ENCODE measurements at regions of chr22 and their contacts with region 1.

Region 1: DNA sequence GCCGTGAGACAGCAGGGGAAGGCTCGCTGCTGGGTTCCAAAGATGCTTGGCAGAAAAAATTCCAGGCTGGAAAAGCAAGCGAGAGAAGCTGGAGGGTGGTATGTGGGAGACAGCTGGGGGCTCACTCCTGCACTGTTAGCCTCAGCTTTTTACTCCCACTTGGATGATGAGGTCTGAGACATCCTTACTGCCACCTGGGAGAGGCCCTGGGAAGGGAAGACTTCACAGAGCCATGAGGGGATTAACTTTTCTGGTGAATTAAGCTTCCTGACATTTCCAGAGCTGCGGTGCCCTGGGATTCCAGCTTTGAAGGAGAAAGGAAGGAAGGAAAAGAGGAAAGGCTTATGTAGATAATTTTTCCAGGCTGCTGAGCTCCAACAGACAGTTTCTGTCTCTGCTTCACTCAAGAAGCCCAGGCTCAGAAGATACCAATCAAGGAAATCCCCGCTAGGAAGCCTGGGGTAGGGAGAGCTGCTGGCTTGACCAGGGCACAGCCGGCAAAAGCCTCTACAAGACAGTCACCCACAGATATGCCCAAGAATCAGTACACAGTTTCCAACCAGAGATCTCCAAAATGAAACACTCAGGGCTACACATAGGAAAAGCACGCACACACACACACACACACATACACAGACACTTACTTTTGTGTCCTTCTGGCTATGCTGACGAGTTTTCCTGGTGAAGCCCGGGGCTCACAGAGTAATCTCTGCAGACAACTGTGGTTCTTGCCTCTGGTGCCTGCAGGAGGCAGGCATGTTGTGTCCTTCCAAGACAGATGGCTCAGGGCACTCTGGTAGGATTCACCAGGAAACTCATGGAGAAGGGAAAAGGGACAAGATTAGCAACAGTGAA is 907 bp downstream of the MCHR1 start:
- DNase-seq: no peak
- H3K4me3 Mint-ChIP-seq: no peak overlapping the region
- H3K27ac Mint-ChIP-seq: no peak overlapping the region
- H3K4me1 Mint-ChIP-seq: peaks cover 27% of the 10 kb centered on the region
- H3K27me3 Mint-ChIP-seq: peaks cover 49% of the 10 kb centered on the region

Region 2: DNA sequence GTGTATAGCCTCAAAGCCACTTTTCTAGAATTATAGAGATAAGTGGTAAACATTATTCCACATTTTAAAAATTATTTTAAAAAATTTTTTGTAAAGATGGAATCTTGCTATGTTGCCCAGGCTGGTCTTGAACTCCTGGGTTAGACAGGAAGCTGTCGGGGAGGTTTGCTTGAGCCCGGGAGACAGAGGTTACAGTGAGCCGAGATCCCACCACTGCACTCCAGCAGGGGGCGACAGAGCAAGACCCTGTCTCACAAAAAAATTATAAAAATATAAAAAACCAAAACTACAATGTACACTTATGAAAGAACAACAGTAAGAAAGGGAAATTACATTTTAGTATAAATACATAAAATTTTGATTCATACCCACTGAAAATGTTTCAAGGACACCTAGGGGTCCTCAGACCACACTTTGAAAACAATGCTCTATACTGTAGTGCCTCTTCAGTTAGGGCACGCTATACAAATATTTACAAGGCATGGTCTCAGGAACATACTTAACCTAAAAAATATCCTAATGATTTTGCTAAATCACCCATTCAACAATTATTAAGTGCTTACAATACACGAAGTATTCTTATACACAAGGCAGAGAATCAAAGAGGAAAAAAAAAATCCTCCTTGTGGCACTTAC is 154.8 kb before region 1 on chr22:
- CTCF ChIA-PET with region 1: interaction called, 13 read pairs
- DNase-seq: peak; percentile 81
- H3K4me3 Mint-ChIP-seq: no peak overlapping the region
- H3K27ac Mint-ChIP-seq: no peak overlapping the region
- H3K4me1 Mint-ChIP-seq: peaks cover 20% of the 10 kb centered on the region
- H3K27me3 Mint-ChIP-seq: no peaks in the 10 kb centered on the region

Region 3: GRCh38 chr22:40709752-40710413 is 29.7 kb after region 1 on chr22:
- CTCF ChIA-PET with region 1: interaction called, 20 read pairs
- DNase-seq: no peak
- H3K4me3 Mint-ChIP-seq: no peak overlapping the region
- H3K27ac Mint-ChIP-seq: no peak overlapping the region
- H3K4me1 Mint-ChIP-seq: peaks cover 14% of the 10 kb centered on the region
- H3K27me3 Mint-ChIP-seq: peaks cover 36% of the 10 kb centered on the region

Region 4: DNA sequence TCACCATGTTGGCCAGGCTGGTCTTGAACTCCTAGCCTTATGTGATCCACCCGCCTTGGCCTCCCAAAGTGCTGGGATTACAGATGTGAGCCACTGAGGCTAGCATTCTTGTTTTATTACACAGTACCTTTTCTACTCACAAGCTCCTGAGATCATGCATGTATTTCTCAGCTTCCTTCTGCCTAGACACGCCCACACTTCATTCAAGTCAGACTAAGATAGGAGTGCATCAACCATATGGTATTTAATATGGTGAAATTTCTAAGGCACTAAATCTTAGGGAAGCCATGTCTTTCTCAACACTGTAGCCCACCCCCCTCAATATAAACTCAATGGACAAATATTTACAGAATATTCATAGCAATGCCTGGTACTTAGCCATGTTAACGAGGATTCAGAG is 76.9 kb after region 1 on chr22:
- CTCF ChIA-PET with region 1: interaction called, 70 read pairs
- DNase-seq: no peak
- H3K4me3 Mint-ChIP-seq: no peak overlapping the region
- H3K27ac Mint-ChIP-seq: no peak overlapping the region
- H3K4me1 Mint-ChIP-seq: no peaks in the 10 kb centered on the region
- H3K27me3 Mint-ChIP-seq: peaks cover 8% of the 10 kb centered on the region

Region 5: DNA sequence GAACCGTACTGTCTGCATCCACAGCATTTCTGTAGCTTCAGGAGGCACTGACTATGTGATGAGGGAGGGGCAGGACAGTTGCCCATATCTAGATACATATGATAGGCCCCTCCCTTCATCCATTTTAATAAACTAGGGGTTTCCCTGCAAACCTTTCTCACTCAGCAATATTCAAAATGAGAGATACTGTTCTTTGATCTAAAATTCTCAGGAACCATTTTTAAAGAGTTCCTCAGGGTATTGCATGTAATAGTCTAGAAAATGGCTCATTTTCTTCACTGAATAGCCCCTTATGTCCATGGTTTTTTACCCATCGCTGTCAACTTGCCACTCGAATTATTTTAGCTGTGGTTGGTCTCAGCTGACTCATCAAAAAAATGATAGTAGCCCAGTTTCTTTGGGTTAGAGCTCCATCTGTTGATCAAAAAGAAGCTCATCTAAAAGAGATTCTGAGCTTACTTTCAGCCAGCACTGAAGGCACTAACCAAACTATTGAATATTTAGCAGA is 218.7 kb after region 1 on chr22:
- CTCF ChIA-PET with region 1: interaction called, 47 read pairs
- DNase-seq: peak; percentile 23
- H3K4me3 Mint-ChIP-seq: no peak overlapping the region
- H3K27ac Mint-ChIP-seq: no peak overlapping the region
- H3K4me1 Mint-ChIP-seq: peaks cover 8% of the 10 kb centered on the region
- H3K27me3 Mint-ChIP-seq: no peaks in the 10 kb centered on the region

Region 6: DNA sequence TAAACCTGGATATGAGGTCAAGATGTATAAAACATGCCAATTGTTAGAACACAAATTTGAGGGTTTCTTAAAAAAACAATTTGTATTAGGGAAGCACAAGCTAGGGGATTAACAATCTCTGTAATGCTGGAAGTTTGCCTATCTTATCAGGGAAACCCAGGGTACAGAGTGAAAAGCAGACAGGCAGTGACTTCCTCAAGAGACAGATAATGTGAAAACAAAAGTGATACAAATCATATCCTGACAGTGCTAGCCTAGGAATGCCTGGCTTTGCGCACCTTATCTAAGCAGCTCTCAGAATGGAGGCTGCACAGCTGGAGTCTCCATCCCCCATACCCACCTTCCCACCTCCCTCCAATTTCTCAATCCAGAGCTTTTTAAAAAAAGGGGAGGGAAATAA is 248.5 kb after region 1 on chr22:
- CTCF ChIA-PET with region 1: no interaction called
- DNase-seq: no peak
- H3K4me3 Mint-ChIP-seq: no peak overlapping the region
- H3K27ac Mint-ChIP-seq: no peak overlapping the region
- H3K4me1 Mint-ChIP-seq: no peaks in the 10 kb centered on the region
- H3K27me3 Mint-ChIP-seq: no peaks in the 10 kb centered on the region

Measured in activated naive CD4-positive, alpha-beta T cell treated with anti-CD3 and anti-CD28 coated beads, Interleukin-2, amount 10 ng/mL, durations not matched to agents 7 days and 5 days (primary cell).